Activated CD4-positive, alpha-beta memory T cell treated with anti-CD3 and anti-CD28 coated beads, Interleukin-2, amount 10 ng/mL, durations not matched to agents 7 days and 5 days (primary cell): ENCODE measurements at regions of chr19 and their contacts with region 1.

Region 1: DNA sequence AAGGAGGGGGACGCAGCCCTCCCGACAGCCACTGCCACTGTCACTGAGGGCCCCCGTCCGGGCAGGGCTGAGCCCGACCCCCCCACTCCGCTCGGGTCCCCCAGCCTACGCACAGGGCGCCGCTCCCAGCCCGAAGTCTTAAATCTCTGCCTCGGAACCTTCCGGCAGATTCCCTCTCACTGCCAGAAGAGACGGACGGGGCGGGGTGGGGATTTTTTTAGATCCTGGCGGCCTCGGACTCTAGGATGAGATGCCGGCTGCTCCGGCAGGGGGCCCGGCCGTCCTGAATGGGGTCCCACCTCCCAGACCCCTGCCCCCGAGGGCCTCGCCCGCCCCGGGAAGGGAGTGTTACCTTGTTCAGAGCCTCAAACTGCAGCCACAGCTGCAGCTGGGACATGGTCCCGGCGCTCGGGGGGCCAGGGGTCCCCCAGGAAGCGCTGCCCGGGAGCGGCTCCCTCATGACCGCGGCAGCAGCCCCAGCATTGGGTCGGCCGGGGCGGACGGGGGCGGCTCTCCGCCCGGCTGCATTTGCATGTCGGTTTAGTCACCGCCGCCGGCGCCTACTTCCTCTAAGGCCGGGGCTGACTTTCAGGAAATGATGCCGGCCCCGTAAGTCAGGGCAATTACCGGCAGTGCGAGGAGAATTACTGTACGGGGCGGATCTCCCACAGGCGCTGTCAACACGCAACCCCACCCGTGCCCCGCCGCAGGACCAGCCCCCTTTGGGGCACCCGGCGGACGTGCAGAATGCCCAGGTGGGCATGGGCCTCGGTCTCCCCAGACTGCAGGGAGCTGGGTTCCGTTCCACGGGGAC is 28.2 kb downstream of the GPX4 start:
- DNase-seq: peak; percentile 92
- H3K4me3 Mint-ChIP-seq: peak overlapping the region; percentile 86
- H3K27ac Mint-ChIP-seq: peak overlapping the region; percentile 92
- H3K4me1 Mint-ChIP-seq: peaks cover 44% of the 10 kb centered on the region
- H3K27me3 Mint-ChIP-seq: no peaks in the 10 kb centered on the region

Region 2: GRCh38 chr19:1087813-1088415 is 44.0 kb before region 1 on chr19:
- CTCF ChIA-PET with region 1: no interaction called
- POLR2A ChIA-PET with region 1: interaction called, 15 read pairs
- DNase-seq: peak; percentile 54
- H3K4me3 Mint-ChIP-seq: peak overlapping the region; percentile 20
- H3K27ac Mint-ChIP-seq: peak overlapping the region; percentile 82
- H3K4me1 Mint-ChIP-seq: peaks cover 45% of the 10 kb centered on the region
- H3K27me3 Mint-ChIP-seq: no peaks in the 10 kb centered on the region

Region 3: DNA sequence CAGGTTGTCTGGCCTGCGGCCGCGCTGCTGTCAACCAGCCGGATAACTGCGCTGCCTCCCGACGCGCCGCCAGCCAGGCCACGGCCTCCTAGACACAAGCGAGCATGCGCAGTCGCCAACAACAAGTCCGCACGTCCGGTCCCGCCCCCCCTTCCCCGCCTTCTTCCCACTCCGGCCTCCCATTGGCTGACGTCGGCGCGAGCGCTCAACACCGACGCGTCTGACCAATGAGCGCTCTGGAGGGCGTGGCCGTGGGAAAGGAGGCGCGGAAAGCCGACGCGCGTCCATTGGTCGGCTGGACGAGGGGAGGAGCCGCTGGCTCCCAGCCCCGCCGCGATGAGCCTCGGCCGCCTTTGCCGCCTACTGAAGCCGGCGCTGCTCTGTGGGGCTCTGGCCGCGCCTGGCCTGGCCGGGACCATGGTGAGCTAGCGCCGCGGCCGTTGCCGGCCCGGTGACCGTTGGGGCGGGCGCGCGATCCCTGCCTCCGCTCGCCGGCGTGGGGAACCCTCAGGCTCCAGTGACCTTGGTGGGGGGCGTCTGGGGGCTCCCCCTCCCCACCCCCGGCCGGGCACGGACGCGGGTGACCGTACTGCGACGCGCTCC is 28.1 kb before region 1 on chr19 and contains the start of gene GPX4:
- CTCF ChIA-PET with region 1: no interaction called
- POLR2A ChIA-PET with region 1: interaction called, 32 read pairs
- DNase-seq: peak; percentile 99
- H3K4me3 Mint-ChIP-seq: peak within 1 kb of the TSS; percentile 69
- H3K27ac Mint-ChIP-seq: peak within 1 kb of the TSS; percentile 89
- H3K4me1 Mint-ChIP-seq: peaks cover 47% of the 10 kb centered on the region
- H3K27me3 Mint-ChIP-seq: no peaks in the 10 kb centered on the region
- total RNA-seq, gene GPX4: 141 to 148 TPM

Region 4: GRCh38 chr19:1113033-1113985 is 18.6 kb before region 1 on chr19:
- CTCF ChIA-PET with region 1: interaction called, 7 read pairs
- POLR2A ChIA-PET with region 1: interaction called, 15 read pairs
- DNase-seq: peak; percentile 81
- H3K4me3 Mint-ChIP-seq: no peak overlapping the region
- H3K27ac Mint-ChIP-seq: no peak overlapping the region
- H3K4me1 Mint-ChIP-seq: peaks cover 4% of the 10 kb centered on the region
- H3K27me3 Mint-ChIP-seq: no peaks in the 10 kb centered on the region

Region 5: DNA sequence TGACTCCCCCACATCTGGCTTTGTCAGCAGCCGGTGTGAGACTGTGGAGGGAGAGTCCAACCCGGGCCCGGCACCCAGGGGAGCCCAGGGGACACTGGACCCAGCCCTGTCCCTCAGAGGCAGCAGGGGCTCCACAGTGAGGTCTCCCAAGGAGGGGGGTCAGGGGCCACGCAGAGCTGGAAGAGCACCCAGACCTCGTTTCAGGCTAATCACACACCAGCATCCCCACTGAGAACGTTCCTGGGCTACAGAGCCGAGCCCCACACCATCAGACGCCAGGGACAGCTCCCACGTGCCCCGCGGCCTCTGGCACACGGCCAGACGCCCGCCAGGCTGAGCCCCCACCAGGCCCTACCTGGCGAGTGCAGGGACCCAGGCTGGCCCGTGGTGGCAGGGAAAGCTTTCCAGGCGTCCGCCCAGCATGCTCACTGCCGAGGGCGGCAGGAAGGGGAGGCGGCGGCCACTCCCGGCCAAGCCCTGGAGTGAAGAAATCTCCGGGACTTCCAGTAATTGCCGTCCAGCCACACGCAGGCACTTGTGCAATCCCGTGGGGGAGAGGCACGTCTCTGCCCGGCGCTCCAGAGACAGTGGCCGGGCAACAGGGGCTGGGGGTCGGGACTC is 22.9 kb after region 1 on chr19:
- CTCF ChIA-PET with region 1: no interaction called
- POLR2A ChIA-PET with region 1: no interaction called
- DNase-seq: no peak
- H3K4me3 Mint-ChIP-seq: no peak overlapping the region
- H3K27ac Mint-ChIP-seq: no peak overlapping the region
- H3K4me1 Mint-ChIP-seq: no peaks in the 10 kb centered on the region
- H3K27me3 Mint-ChIP-seq: no peaks in the 10 kb centered on the region

Region 6: DNA sequence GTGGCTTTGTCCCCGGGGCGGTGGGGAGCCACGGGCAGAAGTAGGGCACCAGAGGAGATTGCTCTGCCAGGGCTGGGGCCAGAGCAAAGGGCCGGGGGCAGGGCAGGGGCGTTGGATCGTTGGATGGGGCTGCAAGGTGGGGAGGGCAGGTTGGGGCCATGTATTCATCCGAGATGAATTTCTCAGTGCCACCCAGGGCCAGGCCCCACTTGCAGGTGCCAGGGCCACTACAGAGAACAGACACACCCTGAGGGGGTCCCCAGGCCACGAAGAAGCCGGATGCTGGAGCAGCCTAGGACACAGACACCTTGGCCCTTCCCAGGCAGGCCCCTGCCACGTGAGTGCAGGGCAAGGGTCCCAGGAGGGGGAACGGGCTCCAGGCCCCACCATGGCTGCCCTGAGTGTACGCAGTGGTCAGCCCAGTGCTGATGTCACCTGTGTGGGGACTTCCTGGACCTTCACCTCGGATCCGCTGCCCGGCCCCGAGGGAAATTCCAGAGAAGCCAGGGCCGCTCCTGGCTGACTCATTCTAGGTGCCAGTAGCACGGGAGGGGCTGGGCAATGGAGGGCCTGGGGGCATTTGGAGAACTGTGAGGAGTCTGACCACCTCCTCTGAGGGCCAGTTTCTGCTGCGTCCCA is 51.7 kb after region 1 on chr19:
- CTCF ChIA-PET with region 1: no interaction called
- POLR2A ChIA-PET with region 1: no interaction called
- DNase-seq: no peak
- H3K4me3 Mint-ChIP-seq: no peak overlapping the region
- H3K27ac Mint-ChIP-seq: no peak overlapping the region
- H3K4me1 Mint-ChIP-seq: peaks cover 20% of the 10 kb centered on the region
- H3K27me3 Mint-ChIP-seq: peaks cover 5% of the 10 kb centered on the region

Region 7: GRCh38 chr19:1223018-1223855 is 91.3 kb after region 1 on chr19:
- CTCF ChIA-PET with region 1: no interaction called
- POLR2A ChIA-PET with region 1: no interaction called
- DNase-seq: no peak
- H3K4me3 Mint-ChIP-seq: no peak overlapping the region
- H3K27ac Mint-ChIP-seq: no peak overlapping the region
- H3K4me1 Mint-ChIP-seq: no peaks in the 10 kb centered on the region
- H3K27me3 Mint-ChIP-seq: no peaks in the 10 kb centered on the region